Calu3 (cell line): ENCODE measurements at regions of chr10 and their contacts with region 1.

Region 1: GRCh38 chr10:92880233-92880861 is 32.0 kb downstream of the EXOC6 start:
- DNase-seq: peak; percentile 19
- H3K4me3 Mint-ChIP-seq: no peak overlapping the region
- H3K27ac Mint-ChIP-seq: no peak overlapping the region
- H3K4me1 Mint-ChIP-seq: peaks cover 22% of the 10 kb centered on the region
- H3K27me3 Mint-ChIP-seq: no peaks in the 10 kb centered on the region
- CTCF ChIP-seq: peak; percentile 49

Region 2: DNA sequence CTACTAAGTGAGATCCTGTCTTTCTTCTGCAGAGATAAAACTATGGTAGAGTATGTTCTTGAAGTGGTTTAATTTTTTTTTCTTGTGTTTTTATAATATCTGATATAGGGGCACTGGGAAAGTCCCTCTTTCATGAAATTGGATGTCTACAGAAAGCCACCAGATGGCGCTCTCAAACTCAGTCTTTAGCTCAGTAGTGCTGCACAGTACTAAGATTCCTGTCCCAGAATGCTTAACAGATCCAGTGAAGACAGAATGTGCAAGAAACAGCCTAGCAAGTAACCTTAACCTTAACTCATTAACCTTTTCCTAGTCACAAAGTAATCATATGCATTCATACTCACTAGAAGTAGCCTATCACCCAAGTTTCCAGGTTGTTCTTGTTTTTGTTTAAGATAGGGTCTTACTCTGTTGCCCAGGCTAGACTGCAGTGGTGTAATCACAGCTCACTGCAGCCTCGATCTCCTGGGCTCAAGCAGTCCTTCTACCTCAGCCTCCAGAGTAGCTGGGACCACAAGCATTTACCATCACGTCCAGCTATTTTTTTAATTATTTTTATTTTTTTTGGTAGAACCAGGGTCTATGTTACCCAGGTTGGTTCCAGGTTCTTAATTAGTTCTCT is 363.2 kb before region 1 on chr10:
- CTCF ChIA-PET with region 1: no interaction called
- intact Hi-C with region 1: loop called (anchors 10 kb)
- DNase-seq: peak; percentile 46
- H3K4me3 Mint-ChIP-seq: no peak overlapping the region
- H3K27ac Mint-ChIP-seq: no peak overlapping the region
- H3K4me1 Mint-ChIP-seq: no peaks in the 10 kb centered on the region
- H3K27me3 Mint-ChIP-seq: no peaks in the 10 kb centered on the region
- CTCF ChIP-seq: peak; percentile 31

Region 3: GRCh38 chr10:92695679-92696605 is 184.4 kb before region 1 on chr10:
- CTCF ChIA-PET with region 1: no interaction called
- intact Hi-C with region 1: loop called (anchors 2 kb)
- DNase-seq: no peak
- H3K4me3 Mint-ChIP-seq: peak overlapping the region; percentile 58
- H3K27ac Mint-ChIP-seq: peak overlapping the region; percentile 80
- H3K4me1 Mint-ChIP-seq: peaks cover 29% of the 10 kb centered on the region
- H3K27me3 Mint-ChIP-seq: no peaks in the 10 kb centered on the region
- CTCF ChIP-seq: no peak

Region 4: DNA sequence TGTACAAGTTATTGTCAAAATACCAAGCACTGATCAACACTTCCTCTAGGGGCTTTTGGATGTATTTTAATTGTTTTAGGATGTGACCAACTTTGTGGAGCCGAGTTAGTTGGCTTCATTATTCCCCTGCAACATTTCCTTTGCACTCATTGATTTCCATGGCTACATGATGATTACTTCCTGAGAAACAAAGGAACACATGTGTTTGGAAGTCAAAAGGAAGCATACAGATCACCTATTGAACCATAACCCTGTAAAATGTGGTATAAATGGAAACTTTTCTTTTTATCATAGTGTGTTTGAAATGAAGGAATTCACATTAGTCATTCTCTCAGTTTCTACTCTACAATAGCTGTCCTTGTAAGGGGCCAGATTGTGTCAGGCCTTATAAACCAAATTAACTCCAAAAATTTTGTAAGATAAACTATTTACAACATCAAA is 64.2 kb before region 1 on chr10:
- CTCF ChIA-PET with region 1: no interaction called
- intact Hi-C with region 1: loop called (anchors 2 kb)
- DNase-seq: no peak
- H3K4me3 Mint-ChIP-seq: no peak overlapping the region
- H3K27ac Mint-ChIP-seq: no peak overlapping the region
- H3K4me1 Mint-ChIP-seq: peaks cover 30% of the 10 kb centered on the region
- H3K27me3 Mint-ChIP-seq: no peaks in the 10 kb centered on the region
- CTCF ChIP-seq: no peak

Region 5: GRCh38 chr10:92848441-92849233 is 31.7 kb before region 1 on chr10 and contains the start of gene EXOC6:
- CTCF ChIA-PET with region 1: interaction called, 3 read pairs
- intact Hi-C with region 1: loop called (anchors 2 kb)
- DNase-seq: peak; percentile 82
- H3K4me3 Mint-ChIP-seq: peak within 1 kb of the TSS; percentile 90
- H3K27ac Mint-ChIP-seq: peak within 1 kb of the TSS; percentile 56
- H3K4me1 Mint-ChIP-seq: peaks cover 19% of the 10 kb centered on the region
- H3K27me3 Mint-ChIP-seq: no peaks in the 10 kb centered on the region
- CTCF ChIP-seq: no peak
- total RNA-seq, gene EXOC6: 19.2 TPM in 2 replicates

Region 6: GRCh38 chr10:92957223-92958010 is 77.1 kb after region 1 on chr10:
- CTCF ChIA-PET with region 1: no interaction called
- intact Hi-C with region 1: no loop called
- DNase-seq: no peak
- H3K4me3 Mint-ChIP-seq: no peak overlapping the region
- H3K27ac Mint-ChIP-seq: no peak overlapping the region
- H3K4me1 Mint-ChIP-seq: no peaks in the 10 kb centered on the region
- H3K27me3 Mint-ChIP-seq: no peaks in the 10 kb centered on the region
- CTCF ChIP-seq: no peak